PC-9 (cell line): ENCODE measurements at regions of chr3 and their contacts with region 1.

Region 1: GRCh38 chr3:126212602-126213378 is 32.4 kb upstream of the ALDH1L1 start:
- DNase-seq: peak; percentile 76 to 79
- H3K4me3 ChIP-seq: peak overlapping the region; percentile 60
- H3K27ac ChIP-seq: peak overlapping the region; percentile 44
- H3K4me1 ChIP-seq: peaks cover 61% of the 10 kb centered on the region
- H3K27me3 ChIP-seq: no peaks in the 10 kb centered on the region
- CTCF ChIP-seq: peak; percentile 43

Region 2: GRCh38 chr3:126064627-126065258 is 148.0 kb before region 1 on chr3:
- CTCF ChIA-PET with region 1: no interaction called
- POLR2A ChIA-PET with region 1: no interaction called
- intact Hi-C with region 1: no loop called
- DNase-seq: peak in 1 of 2 experiments; percentile 41
- H3K4me3 ChIP-seq: no peak overlapping the region
- H3K27ac ChIP-seq: no peak overlapping the region
- H3K4me1 ChIP-seq: no peaks in the 10 kb centered on the region
- H3K27me3 ChIP-seq: no peaks in the 10 kb centered on the region
- CTCF ChIP-seq: no peak

Region 3: DNA sequence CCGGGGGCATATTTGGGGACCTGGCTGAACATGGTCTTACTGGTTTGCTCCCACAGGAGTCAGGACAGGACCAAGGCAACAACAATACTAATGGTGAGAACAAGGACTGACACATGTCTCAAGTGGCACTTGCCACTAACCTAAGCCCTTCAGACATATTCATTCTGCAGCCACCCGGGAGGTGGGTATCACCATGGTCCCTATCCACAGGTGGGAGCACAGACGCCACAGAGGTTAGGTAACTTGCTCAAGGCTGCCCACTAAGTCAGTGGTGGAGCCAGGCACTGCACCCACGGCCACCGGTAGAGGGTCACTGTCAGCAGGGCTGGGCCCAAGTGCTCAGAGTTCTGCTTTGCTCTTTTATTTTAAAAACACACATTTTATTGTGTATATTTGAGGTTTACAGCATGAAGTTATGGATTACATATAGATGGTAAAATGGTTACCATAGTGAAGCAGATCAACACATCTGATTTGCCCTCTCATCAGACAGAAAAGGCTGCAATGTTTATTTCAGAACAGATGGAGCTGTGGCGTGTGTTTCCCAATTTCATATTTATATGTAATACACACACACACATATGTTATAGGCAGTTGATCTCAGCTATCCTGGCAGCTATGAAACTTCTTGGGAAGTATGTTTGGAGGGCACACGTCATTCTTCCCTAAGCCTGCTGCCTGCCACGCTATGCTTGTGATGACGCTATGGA is 98.9 kb before region 1 on chr3:
- CTCF ChIA-PET with region 1: no interaction called
- POLR2A ChIA-PET with region 1: no interaction called
- intact Hi-C with region 1: no loop called
- DNase-seq: no peak
- H3K4me3 ChIP-seq: no peak overlapping the region
- H3K27ac ChIP-seq: no peak overlapping the region
- H3K4me1 ChIP-seq: peaks cover under 1% of the 10 kb centered on the region; the same call in 1 of the 2 replicates
- H3K27me3 ChIP-seq: no peaks in the 10 kb centered on the region
- CTCF ChIP-seq: no peak; the same call in 1 of the 2 replicates

Region 4: GRCh38 chr3:126129181-126129891 is 83.5 kb before region 1 on chr3:
- CTCF ChIA-PET with region 1: no interaction called
- POLR2A ChIA-PET with region 1: interaction called, 10 read pairs
- intact Hi-C with region 1: no loop called
- DNase-seq: peak; percentile 91 to 96
- H3K4me3 ChIP-seq: peak overlapping the region; percentile 36; the same call in 1 of the 2 replicates
- H3K27ac ChIP-seq: peak overlapping the region; percentile 72
- H3K4me1 ChIP-seq: peaks cover 25% of the 10 kb centered on the region
- H3K27me3 ChIP-seq: no peaks in the 10 kb centered on the region
- CTCF ChIP-seq: peak; percentile 24; the same call in 1 of the 2 replicates

Region 5: GRCh38 chr3:126166009-126166408 is 46.8 kb before region 1 on chr3:
- CTCF ChIA-PET with region 1: no interaction called
- POLR2A ChIA-PET with region 1: no interaction called
- intact Hi-C with region 1: loop called (anchors 5 kb)
- DNase-seq: peak; percentile 45 to 65
- H3K4me3 ChIP-seq: no peak overlapping the region
- H3K27ac ChIP-seq: no peak overlapping the region
- H3K4me1 ChIP-seq: peaks cover 18% of the 10 kb centered on the region; the same call in 1 of the 2 replicates
- H3K27me3 ChIP-seq: no peaks in the 10 kb centered on the region
- CTCF ChIP-seq: no peak

Region 6: DNA sequence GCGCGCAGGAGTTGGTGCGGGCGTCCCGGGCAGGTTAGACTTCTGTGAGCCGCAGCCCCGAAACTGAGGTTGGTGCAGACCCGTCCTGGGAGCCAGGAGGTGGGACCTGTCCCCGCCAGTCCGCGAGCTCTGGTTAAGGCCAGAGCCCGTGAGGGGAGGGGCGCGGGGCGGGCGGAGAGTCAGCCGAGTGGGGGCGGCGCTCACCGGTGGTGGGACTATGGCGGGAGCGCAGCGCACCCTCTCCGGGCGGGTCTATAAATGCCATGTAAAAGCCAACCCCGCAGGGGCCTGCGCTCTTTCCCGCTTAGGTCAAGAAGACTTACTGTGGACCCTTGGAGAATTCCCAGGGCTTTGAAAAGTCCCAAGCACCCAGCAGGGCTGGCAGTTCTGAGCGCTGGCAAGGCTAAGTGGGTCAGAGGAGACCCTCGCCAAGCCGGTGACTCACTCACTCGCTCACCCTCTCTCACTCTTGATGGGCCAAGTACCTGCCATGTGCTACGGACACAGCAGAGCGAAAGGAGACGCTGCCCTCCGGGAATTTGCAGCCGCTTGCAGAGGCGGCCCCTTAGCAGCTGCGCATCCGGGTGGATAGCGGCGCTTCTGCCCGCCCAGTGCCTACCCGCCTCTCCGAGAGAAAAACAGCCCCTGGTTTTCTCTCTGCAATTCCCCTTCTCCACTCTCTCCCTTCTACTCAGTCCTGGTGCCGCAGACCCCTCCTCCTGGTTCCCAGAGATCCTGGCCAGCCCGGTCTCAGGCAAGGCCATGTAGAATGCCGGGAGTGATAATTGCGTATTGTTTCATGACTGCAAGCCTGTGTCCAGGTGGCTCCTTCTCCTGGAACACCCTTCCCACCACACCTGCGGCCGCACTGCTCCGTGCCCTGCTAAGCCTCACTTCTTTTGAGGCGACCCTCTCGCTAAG is 32.1 kb before region 1 on chr3 and contains the start of gene ALDH1L1:
- CTCF ChIA-PET with region 1: no interaction called
- POLR2A ChIA-PET with region 1: interaction called, 5 read pairs
- intact Hi-C with region 1: loop called (anchors 1 kb)
- DNase-seq: peak; percentile 72 to 90
- H3K4me3 ChIP-seq: peak within 1 kb of the TSS; percentile 65
- H3K27ac ChIP-seq: peak within 1 kb of the TSS; percentile 69
- H3K4me1 ChIP-seq: peaks cover 14% of the 10 kb centered on the region; the same call in 1 of the 2 replicates
- H3K27me3 ChIP-seq: no peaks in the 10 kb centered on the region
- CTCF ChIP-seq: no peak
- total RNA-seq, gene ALDH1L1: 46.9 and 50.0 TPM in 2 replicates

Region 7: GRCh38 chr3:126197854-126198584 is 14.8 kb before region 1 on chr3:
- CTCF ChIA-PET with region 1: interaction called, 17 read pairs
- POLR2A ChIA-PET with region 1: interaction called, 7 read pairs
- intact Hi-C with region 1: loop called (anchors 1 kb)
- DNase-seq: peak; percentile 87 to 90
- H3K4me3 ChIP-seq: peak overlapping the region; percentile 59
- H3K27ac ChIP-seq: peak overlapping the region; percentile 83
- H3K4me1 ChIP-seq: 0 out of 2 replicates have a peak, but pooled peaks cover 5% of the 10 kb centered on the region
- H3K27me3 ChIP-seq: no peaks in the 10 kb centered on the region
- CTCF ChIP-seq: peak; percentile 81

Region 8: GRCh38 chr3:126267226-126267975 is 54.6 kb after region 1 on chr3:
- CTCF ChIA-PET with region 1: no interaction called
- POLR2A ChIA-PET with region 1: no interaction called
- intact Hi-C with region 1: loop called (anchors 1 kb)
- DNase-seq: peak; percentile 63 to 92
- H3K4me3 ChIP-seq: peak overlapping the region; percentile 51; the same call in 1 of the 2 replicates
- H3K27ac ChIP-seq: no peak overlapping the region
- H3K4me1 ChIP-seq: no peaks in the 10 kb centered on the region
- H3K27me3 ChIP-seq: no peaks in the 10 kb centered on the region; the same call in 1 of the 2 replicates
- CTCF ChIP-seq: no peak

Region 9: GRCh38 chr3:126389112-126389793 is 176.5 kb after region 1 on chr3:
- CTCF ChIA-PET with region 1: interaction called, 4 read pairs
- POLR2A ChIA-PET with region 1: no interaction called
- intact Hi-C with region 1: loop called (anchors 2 kb)
- DNase-seq: peak; percentile 85 to 89
- H3K4me3 ChIP-seq: peak overlapping the region; percentile 60; the same call in 1 of the 2 replicates
- H3K27ac ChIP-seq: no peak overlapping the region
- H3K4me1 ChIP-seq: 0 out of 2 replicates have a peak, but pooled peaks cover 11% of the 10 kb centered on the region
- H3K27me3 ChIP-seq: no peaks in the 10 kb centered on the region
- CTCF ChIP-seq: peak; percentile 77

Region 10: DNA sequence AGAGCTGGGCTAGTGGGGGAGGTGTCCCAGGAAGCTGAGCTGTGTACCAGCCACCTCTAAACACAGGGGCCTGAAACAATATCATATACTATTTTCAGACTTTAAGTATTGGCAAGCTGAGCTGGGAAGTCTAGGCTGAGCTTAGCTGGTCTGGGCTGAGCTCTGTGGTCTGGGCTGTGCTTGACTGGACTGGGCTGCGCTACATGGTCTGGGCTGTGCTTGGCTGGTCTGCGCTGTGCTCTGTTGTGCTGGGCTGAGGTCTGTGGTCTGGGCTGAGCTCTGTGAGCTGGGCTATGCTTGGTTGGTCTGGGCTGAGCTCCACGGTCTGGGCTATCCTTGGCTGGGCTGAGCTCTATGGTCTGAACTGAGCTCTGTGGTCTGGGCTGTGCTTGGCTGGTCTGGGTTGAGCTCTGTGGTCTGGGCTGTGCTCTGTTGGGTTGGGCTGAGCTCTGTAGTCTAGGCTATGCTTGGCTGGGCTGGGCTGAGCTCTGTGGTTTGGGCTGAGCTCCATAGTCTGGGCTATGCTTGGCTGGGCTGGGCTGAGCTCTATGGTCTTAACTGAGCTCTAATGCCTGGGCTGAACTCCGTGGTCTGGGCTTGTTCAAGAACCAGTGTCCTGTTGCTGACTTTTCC is 862.1 kb after region 1 on chr3:
- CTCF ChIA-PET with region 1: no interaction called
- POLR2A ChIA-PET with region 1: no interaction called
- intact Hi-C with region 1: no loop called
- DNase-seq: peak; percentile 51 to 59
- H3K4me3 ChIP-seq: no peak overlapping the region
- H3K27ac ChIP-seq: peak overlapping the region; percentile 46; the same call in 1 of the 2 replicates
- H3K4me1 ChIP-seq: peaks cover 34% of the 10 kb centered on the region
- H3K27me3 ChIP-seq: 0 out of 2 replicates have a peak, but pooled peaks cover 3% of the 10 kb centered on the region
- CTCF ChIP-seq: no peak